Activated CD4-positive, alpha-beta T cell treated with anti-CD3 and anti-CD28 coated beads for 36 hours (primary cell): ENCODE measurements at regions of chr12 and their contacts with region 1.

Region 1: GRCh38 chr12:74415633-74416032 is 122.0 kb upstream of the ATXN7L3B start:
- DNase-seq: no peak
- ATAC-seq: no peak
- H3K4me3 Mint-ChIP-seq: no peak overlapping the region
- H3K27ac Mint-ChIP-seq: no peak overlapping the region
- H3K4me1 Mint-ChIP-seq: no peaks in the 10 kb centered on the region
- H3K27me3 Mint-ChIP-seq: peaks cover 6% of the 10 kb centered on the region

Region 2: DNA sequence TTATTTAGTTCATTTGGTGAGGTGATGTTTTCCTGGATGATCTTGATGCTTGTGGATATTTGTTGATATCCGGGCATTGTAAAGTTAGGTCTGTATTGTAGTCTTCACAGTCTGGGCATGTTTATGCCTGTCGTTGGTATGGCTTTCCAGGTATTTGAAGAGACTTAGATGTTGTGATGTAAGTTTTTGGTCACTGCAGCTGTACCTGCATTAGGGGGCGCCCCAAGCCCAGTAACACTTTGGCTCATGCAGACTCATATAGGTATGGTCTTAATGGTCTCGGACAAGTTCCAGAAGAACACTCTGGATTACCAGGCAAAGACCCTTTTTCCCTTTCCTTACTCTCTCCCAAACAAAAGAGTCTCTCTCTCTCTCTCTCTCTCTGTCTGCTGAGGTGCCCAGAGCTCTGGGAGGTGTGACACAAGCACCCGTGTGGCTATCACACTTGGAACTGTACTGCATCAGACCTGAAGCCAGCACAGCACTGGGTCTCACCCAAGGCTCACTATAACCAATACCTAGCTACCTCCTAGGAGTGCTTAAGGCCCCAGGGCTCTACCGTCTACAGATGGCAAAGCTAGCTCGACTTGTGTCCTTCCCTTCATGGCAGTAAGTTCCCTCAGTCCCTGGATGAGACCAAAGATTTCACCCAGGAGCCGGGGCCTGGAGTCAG is 303.8 kb before region 1 on chr12:
- CTCF ChIA-PET with region 1: interaction called, 3 read pairs
- POLR2A ChIA-PET with region 1: no interaction called
- intact Hi-C with region 1: loop called in 1 of 2 experiments (anchors 2 kb)
- DNase-seq: peak; percentile 23
- ATAC-seq: no peak
- H3K4me3 Mint-ChIP-seq: no peak overlapping the region
- H3K27ac Mint-ChIP-seq: no peak overlapping the region
- H3K4me1 Mint-ChIP-seq: no peaks in the 10 kb centered on the region
- H3K27me3 Mint-ChIP-seq: no peaks in the 10 kb centered on the region

Region 3: GRCh38 chr12:74381958-74382357 is 33.7 kb before region 1 on chr12:
- CTCF ChIA-PET with region 1: no interaction called
- POLR2A ChIA-PET with region 1: no interaction called
- intact Hi-C with region 1: no loop called
- DNase-seq: no peak
- ATAC-seq: no peak
- H3K4me3 Mint-ChIP-seq: no peak overlapping the region
- H3K27ac Mint-ChIP-seq: no peak overlapping the region
- H3K4me1 Mint-ChIP-seq: no peaks in the 10 kb centered on the region
- H3K27me3 Mint-ChIP-seq: no peaks in the 10 kb centered on the region

Region 4: GRCh38 chr12:74537707-74538385 is 122.2 kb after region 1 on chr12 and contains the start of gene ATXN7L3B:
- CTCF ChIA-PET with region 1: interaction called, 3 read pairs
- POLR2A ChIA-PET with region 1: no interaction called
- intact Hi-C with region 1: loop called in 1 of 2 experiments (anchors 2 kb)
- DNase-seq: peak; percentile 96
- ATAC-seq: peak; percentile 96
- H3K4me3 Mint-ChIP-seq: peak within 1 kb of the TSS; percentile 97
- H3K27ac Mint-ChIP-seq: peak within 1 kb of the TSS; percentile 97
- H3K4me1 Mint-ChIP-seq: peaks cover 50% of the 10 kb centered on the region
- H3K27me3 Mint-ChIP-seq: no peaks in the 10 kb centered on the region
- total RNA-seq, gene ATXN7L3B: 16.4 to 19.7 TPM